ENCODE measurements at regions of chr6 and their contacts with region 1.

Region 1: DNA sequence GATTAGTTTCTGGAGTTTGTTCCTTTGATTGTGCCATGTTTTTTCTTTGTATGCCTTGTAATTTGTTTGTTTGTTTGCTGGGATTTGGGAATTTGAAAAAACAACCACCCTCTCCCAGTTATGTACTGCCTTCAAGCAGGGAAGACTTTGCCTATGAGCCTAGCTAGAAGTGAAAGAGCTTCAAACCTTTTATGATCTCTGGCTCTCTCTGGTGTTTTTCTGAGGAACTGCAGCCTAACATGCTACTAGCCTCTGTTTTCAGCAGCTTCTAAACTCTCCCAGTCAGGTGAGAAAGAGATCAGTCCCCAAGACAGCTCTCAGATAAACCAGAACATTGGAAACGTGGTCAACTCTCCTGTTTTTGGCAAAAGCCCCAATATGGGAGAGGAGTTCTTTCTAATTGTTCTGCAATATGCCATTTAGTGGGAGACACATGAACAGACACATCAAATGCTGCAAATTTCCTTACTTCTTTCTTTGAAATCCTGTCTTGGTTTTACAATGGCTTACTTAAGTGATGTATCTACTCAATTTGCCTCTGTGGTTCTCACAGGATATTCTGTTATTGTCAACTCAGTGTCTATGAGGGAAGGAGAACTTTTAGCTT is 58.9 kb upstream of the SERINC1 start:
- DNase-seq: peak; percentile 42
- H3K27ac ChIP-seq: no peak overlapping the region
- CTCF ChIP-seq: peak; percentile 88

Region 2: GRCh38 chr6:122381497-122382265 is 148.9 kb before region 1 on chr6:
- CTCF ChIA-PET with region 1: interaction called, 13 read pairs
- POLR2A ChIA-PET with region 1: no interaction called
- DNase-seq: peak; percentile 57
- H3K27ac ChIP-seq: no peak overlapping the region
- CTCF ChIP-seq: peak; percentile 79

Region 3: GRCh38 chr6:122491919-122492555 is 38.5 kb before region 1 on chr6:
- CTCF ChIA-PET with region 1: interaction called, 54 read pairs
- POLR2A ChIA-PET with region 1: no interaction called
- DNase-seq: peak; percentile 54
- H3K27ac ChIP-seq: no peak overlapping the region
- CTCF ChIP-seq: peak; percentile 79

Measured in RWPE1 (cell line).